ENCODE measurements at regions of chr3 and their contacts with region 1.

Region 1: GRCh38 chr3:195909644-195910508 is 1.5 kb upstream of the TNK2 start:
- DNase-seq: peak; percentile 88
- H3K4me3 ChIP-seq: peak overlapping the region; percentile 63
- H3K27ac ChIP-seq: peak overlapping the region; percentile 41
- H3K4me1 ChIP-seq: peaks cover 45% of the 10 kb centered on the region
- CTCF ChIP-seq: 0 out of 2 replicates have a peak, but pooled peaks have one; percentile 11

Region 2: DNA sequence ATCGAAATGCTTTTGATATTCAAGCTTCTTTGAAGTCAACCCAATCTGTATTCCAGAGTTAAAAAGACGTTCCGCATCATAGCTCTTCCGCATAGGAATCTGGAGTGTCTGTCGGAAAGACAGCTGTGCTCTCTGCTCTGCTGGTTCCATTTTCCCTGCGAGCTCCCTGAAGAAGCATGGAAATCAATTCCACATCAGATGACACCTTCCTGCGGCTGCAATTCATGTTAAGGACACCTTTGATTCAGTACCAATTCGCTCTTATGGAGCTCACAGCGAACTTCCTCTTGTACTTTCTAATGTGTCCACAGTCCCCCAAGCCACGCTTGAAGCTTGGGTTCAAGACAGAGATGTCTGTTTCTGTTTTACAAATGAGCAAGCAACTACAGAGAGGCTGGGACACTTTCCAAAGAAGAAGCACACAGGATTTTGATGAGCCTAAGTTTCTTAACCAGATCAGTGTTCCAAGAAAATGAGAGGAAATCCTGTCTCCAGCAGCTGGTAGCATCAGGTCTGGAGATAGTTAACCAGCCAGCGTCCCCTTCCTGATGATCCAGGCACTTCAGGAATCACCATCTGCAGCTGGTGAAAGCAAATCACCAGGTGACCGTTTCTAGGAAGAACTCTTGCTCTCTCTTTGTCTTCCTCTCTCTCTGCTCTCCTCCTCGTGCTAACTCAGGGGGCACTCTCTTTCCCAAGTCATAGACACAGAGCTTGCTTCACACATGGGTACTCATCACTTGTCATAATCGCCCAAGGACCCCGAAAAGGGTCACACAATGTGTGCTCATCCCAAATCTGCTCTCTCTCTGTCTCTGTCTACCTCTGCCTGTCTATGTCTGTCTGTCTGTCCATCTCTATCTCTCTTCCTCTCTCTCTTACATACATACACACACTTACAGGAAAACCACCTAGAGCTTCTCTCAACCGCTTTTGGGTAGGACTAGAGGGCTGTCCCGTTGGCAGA is 942.4 kb before region 1 on chr3:
- CTCF ChIA-PET with region 1: no interaction called
- POLR2A ChIA-PET with region 1: no interaction called
- intact Hi-C with region 1: no loop called
- DNase-seq: no peak
- H3K4me3 ChIP-seq: no peak overlapping the region
- H3K27ac ChIP-seq: no peak overlapping the region
- H3K4me1 ChIP-seq: no peaks in the 10 kb centered on the region
- CTCF ChIP-seq: no peak

Region 3: DNA sequence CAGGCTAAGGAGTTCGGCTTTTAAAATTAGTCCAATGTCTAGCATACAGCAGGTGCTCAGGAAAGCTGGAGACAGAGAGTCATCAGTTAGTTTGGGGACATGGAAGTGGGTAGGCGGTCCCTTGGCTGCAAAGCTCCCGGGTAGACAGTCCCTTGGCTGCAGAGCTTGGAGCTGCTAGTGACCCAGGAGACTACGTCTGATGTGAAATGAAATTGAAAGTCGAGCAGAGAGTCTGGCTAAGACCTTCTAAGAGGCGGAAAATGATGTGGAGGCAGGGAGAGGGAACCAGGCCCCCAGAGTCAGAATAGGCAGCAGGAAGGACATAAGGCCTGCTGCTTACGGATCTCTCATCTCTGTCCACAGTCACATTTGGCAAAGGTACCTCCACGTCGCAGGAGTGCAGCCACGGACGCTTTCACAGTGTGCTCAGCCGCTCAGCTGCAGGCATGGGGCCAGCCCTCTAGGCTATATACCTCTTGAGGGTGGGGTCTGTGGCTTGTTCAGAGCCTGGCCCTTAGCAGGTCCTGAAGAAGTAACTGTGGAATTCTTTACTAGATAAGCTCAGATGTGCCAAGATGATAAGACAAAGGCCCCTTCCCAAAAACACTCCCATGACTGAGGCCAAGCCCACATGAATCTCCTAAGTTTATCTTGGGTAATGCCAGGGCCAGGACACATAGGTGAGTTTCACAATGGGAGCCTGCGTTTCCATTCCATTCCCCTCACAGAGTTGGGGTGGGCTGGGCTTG is 770.6 kb before region 1 on chr3:
- CTCF ChIA-PET with region 1: no interaction called
- POLR2A ChIA-PET with region 1: no interaction called
- intact Hi-C with region 1: no loop called
- DNase-seq: no peak
- H3K4me3 ChIP-seq: no peak overlapping the region
- H3K27ac ChIP-seq: no peak overlapping the region
- H3K4me1 ChIP-seq: peaks cover 4% of the 10 kb centered on the region
- CTCF ChIP-seq: no peak

Region 4: DNA sequence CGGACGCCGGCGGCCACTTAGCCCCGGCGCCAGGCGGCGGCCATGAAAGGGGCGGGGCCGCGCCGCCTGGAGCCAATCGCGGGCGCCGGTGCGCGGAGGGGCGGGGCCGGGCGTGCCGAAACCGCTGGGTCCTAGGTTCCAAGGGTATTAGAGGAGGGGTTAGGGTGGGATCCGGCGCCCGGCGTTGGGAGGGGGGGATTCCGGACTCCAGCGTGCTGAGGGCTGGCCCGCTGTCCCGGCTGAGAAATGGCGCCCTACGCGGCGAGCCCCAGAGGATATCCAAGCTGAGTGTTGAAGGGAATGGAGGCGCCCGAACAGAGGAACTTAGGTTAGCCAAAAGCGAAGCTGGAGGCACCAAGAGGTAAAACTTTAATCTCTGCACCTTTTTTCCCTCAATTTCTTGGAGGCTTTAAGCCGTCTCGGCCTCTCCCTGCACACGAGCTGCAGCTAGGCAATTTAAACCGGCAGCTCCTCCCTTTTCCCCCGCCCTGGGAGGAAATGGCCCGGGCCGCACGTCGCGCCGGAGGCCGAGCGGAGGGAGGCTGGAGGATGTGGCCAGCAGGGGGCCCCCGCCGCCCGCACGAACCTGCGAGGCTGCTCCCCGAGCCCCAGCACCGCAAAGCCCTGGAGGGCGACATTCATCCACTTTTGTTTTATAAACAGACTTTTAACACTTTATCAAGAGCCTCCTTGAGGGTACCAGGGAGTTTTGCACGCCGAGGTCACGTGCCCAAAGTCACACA is 638.6 kb before region 1 on chr3 and contains the start of gene XXYLT1:
- CTCF ChIA-PET with region 1: no interaction called
- POLR2A ChIA-PET with region 1: no interaction called
- intact Hi-C with region 1: loop called (anchors 2 kb)
- DNase-seq: peak; percentile 93
- H3K4me3 ChIP-seq: peak within 1 kb of the TSS; percentile 79
- H3K27ac ChIP-seq: peak within 1 kb of the TSS; percentile 77
- H3K4me1 ChIP-seq: peaks cover 24% of the 10 kb centered on the region
- CTCF ChIP-seq: peak; percentile 99
- total RNA-seq, gene XXYLT1: 16.2 and 19.6 TPM in 2 replicates

Region 5: DNA sequence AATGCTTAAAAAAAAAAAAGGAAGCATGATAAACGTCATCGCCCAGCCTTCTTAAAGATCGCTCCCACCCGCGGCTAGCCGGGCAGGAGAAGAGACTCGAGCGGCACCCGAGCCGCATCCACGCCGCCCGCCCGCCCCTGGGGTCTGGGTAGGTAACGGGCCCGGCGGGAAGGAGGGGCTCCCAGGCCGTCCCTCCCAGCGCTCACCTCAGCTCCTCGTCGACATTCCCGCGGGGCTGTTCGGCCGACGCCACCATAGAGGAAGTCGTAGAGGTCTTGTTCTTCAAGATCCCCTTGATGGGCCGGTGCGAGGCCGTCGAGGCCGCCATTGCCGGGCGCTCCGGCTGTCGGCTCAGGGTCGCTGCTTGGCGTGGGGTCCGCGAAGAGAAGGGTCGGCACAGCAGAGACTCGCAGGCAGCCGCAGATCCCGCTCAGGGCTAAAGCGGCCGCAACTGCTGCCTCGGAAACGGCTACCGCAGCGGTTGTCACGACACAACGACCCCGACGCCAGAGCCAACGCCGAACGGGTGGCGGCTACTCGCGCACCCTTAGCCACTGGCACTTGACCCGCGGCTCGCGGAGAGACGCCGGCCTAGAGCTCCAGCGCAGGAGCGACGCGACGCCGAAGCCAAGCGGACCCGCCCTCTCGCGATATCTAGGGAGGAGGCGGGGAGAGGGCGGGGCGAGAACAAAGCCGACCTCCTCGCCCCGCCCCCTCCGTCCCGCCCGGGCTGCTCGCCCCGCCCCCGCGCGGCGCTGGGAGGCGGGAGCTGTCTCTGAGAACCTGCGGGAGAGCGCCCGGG is 367.0 kb before region 1 on chr3 and contains the start of gene PPP1R2:
- CTCF ChIA-PET with region 1: no interaction called
- POLR2A ChIA-PET with region 1: interaction called, 3 read pairs
- intact Hi-C with region 1: loop called (anchors 5 kb)
- DNase-seq: peak; percentile 95
- H3K4me3 ChIP-seq: peak within 1 kb of the TSS; percentile 89
- H3K27ac ChIP-seq: peak within 1 kb of the TSS; percentile 89
- H3K4me1 ChIP-seq: peaks cover 59% of the 10 kb centered on the region
- CTCF ChIP-seq: no peak
- total RNA-seq, gene PPP1R2: 239 and 294 TPM in 2 replicates

Region 6: GRCh38 chr3:195863121-195864006 is 46.5 kb before region 1 on chr3:
- CTCF ChIA-PET with region 1: interaction called, 3 read pairs
- POLR2A ChIA-PET with region 1: no interaction called
- intact Hi-C with region 1: loop called (anchors 1 kb)
- DNase-seq: peak; percentile 69
- H3K4me3 ChIP-seq: no peak overlapping the region
- H3K27ac ChIP-seq: no peak overlapping the region
- H3K4me1 ChIP-seq: no peaks in the 10 kb centered on the region
- CTCF ChIP-seq: peak; percentile 85

Region 7: GRCh38 chr3:195894780-195895607 is 14.9 kb before region 1 on chr3:
- CTCF ChIA-PET with region 1: interaction called, 20 read pairs
- POLR2A ChIA-PET with region 1: interaction called, 38 read pairs
- intact Hi-C with region 1: loop called (anchors 1 kb)
- DNase-seq: peak; percentile 82
- H3K4me3 ChIP-seq: peak overlapping the region; percentile 88
- H3K27ac ChIP-seq: peak overlapping the region; percentile 68
- H3K4me1 ChIP-seq: peaks cover 44% of the 10 kb centered on the region
- CTCF ChIP-seq: peak; percentile 89

Region 8: DNA sequence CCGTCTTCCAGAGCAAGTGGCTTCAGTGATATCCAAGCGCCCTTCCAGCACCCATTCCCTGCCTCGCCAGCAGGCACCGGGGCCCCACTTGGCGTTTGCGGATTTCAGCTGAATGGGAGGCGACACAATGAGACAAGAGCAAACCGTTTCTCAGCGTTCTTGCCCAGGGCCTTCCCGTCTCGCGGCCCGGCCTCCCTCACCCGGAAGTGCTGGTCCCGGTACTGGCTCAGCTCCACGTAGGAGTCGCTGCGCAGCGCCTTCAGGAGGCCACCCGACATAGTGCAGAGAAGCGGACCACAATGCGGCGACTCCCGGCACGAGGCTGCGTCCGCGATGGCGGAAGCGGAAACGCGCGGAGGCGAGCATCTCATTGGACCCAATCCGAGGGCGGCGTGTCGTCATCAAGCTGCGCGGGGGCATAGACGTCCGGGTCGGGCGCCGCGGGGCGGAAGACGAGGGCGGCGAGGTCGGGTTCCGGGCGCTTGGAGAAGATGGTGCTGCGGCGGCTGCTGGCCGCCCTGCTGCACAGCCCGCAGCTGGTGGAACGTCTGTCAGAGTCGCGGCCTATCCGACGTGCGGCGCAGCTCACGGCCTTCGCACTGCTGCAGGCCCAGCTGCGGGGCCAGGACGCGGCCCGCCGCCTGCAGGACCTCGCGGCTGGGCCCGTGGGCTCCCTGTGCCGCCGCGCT is 1032.5 kb after region 1 on chr3 and contains the start of gene NCBP2:
- CTCF ChIA-PET with region 1: no interaction called
- POLR2A ChIA-PET with region 1: no interaction called
- intact Hi-C with region 1: loop called (anchors 10 kb)
- DNase-seq: peak; percentile 99
- H3K4me3 ChIP-seq: peak within 1 kb of the TSS; percentile 90
- H3K27ac ChIP-seq: peak within 1 kb of the TSS; percentile 83
- H3K4me1 ChIP-seq: peaks cover 23% of the 10 kb centered on the region
- CTCF ChIP-seq: peak; percentile 75
- total RNA-seq, gene NCBP2: 46.4 and 66.7 TPM in 2 replicates